ENCODE measurements at regions of chr11 and their contacts with region 1.

Region 1: GRCh38 chr11:129117595-129118350 is 74.4 kb downstream of the ARHGAP32 start:
- DNase-seq: peak; percentile 25 to 38
- H3K4me3 ChIP-seq: no peak overlapping the region
- H3K27ac ChIP-seq: no peak overlapping the region
- H3K4me1 ChIP-seq: no peaks in the 10 kb centered on the region
- H3K27me3 ChIP-seq: no peaks in the 10 kb centered on the region
- CTCF ChIP-seq: peak; percentile 86 to 93 (median 88)
- POLR2A ChIP-seq: no peak

Region 2: DNA sequence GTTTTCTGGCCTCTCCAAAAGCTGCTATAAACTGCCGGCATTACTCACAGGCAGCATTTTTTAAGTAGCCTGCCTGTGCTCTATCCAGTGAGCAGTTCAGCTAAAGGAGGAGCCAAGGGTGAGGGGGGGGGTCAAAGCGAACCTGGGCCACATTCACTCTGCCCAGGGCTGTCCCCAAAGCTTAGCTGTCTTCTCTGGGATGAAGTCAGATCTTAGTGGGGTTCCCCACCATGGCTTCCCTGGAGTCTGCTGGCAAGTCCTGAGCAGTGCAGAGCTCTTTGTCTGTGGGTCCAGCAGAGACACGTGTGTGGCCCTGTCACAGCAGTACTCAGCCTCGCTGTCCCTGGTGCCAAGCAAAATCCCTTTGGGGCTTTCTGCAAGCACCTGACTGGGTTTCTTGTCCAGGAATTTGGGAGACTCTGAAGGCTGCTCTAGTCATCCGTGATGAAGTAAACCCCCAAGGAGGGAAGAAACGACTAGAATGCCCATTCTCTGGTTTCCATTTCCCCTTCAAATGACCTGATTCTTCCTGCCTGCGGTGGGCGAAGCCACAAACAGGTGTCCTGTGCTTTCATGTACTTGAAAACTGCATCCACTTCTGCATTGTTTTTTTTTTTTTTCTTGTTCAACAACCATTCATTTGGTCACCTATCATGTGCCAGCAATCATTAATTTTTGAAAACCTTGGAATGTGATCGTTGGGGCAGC is 224.0 kb before region 1 on chr11:
- intact Hi-C with region 1: no loop called
- DNase-seq: no peak
- H3K4me3 ChIP-seq: no peak overlapping the region
- H3K27ac ChIP-seq: no peak overlapping the region
- H3K4me1 ChIP-seq: peaks cover 0 to 12% of the 10 kb centered on the region in 2 donors
- H3K27me3 ChIP-seq: no peaks in the 10 kb centered on the region
- CTCF ChIP-seq: no peak
- POLR2A ChIP-seq: no peak

Region 3: DNA sequence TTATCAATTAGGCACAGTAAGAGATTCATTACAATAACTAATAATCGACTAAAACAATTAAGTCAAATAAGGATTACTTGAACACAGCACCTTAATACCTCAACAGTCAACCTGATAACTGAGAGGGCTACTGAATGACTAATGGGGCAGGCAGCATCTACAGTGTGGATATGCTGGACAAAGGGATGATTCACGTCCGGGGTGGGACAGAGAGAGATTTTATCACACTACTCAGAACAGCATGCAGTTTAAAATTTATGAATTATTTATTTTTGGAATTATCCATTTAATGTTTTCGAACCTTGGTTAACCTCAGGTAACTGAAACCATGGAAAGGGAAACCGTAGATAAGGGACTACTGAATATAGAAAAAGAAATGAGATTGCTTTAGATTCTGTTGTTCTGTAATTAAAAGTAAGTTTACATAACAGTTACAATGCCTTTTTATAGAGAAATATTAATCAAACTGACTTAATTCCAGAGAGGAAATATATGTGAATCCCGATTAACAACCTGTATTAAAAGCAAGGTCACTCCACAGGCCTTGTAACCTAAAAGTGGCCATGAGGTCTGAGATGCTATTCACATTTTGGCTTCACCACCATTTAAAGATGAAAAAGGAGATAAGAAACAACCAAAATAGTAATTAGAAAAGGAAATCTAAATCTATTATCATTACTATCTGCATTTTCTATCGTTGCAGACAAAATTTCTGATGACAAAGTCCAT is 56.1 kb before region 1 on chr11:
- intact Hi-C with region 1: no loop called
- DNase-seq: no peak
- H3K4me3 ChIP-seq: no peak overlapping the region
- H3K27ac ChIP-seq: no peak overlapping the region
- H3K4me1 ChIP-seq: no peaks in the 10 kb centered on the region
- H3K27me3 ChIP-seq: no peaks in the 10 kb centered on the region
- CTCF ChIP-seq: no peak
- POLR2A ChIP-seq: no peak

Region 4: GRCh38 chr11:129331871-129332274 is 214.1 kb after region 1 on chr11:
- intact Hi-C with region 1: loop called (anchors 5 kb)
- DNase-seq: peak; percentile 78 to 79
- H3K4me3 ChIP-seq: no peak overlapping the region
- H3K27ac ChIP-seq: no peak overlapping the region
- H3K4me1 ChIP-seq: no peaks in the 10 kb centered on the region
- H3K27me3 ChIP-seq: no peaks in the 10 kb centered on the region
- CTCF ChIP-seq: peak; percentile 84 to 90 (median 86)
- POLR2A ChIP-seq: no peak

Measured in uterus (tissue), 4 donors.